Sigmoid colon (tissue), 7 donors: ENCODE measurements at regions of chr20 and their contacts with region 1.

Region 1: DNA sequence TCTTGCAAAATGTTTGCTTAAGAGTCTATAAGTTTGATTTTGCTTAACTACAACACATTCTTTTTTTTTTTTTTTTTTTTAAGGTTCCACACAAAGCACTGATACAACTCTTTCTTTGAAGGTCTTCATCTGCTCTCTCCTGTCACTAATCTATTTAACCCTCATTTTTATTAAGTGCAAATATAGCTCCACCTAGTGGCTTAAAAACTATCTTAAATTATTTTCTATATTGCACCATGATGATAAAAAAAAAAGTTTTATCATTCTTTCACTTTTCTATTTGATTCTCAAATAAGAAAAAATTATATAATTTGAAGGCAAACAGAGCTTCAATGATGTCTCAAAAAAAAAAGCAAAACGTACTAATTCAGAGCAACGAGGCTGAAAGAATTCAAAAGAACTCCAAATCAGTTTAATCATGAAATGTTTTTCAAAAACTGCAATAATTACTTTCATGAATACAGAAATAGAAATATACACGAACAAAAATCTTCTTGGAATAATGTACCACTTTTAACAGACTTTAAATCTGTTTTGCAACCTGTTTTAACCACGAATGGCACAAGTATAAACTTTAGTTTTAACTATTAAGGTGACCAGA is 12.8 kb downstream of the ESF1 start:
- DNase-seq: no peak
- H3K4me3 ChIP-seq: no peak overlapping the region
- H3K27ac ChIP-seq: no peak overlapping the region
- H3K4me1 ChIP-seq: no peaks in the 10 kb centered on the region
- H3K27me3 ChIP-seq: no peaks in the 10 kb centered on the region
- CTCF ChIP-seq: peak in 3 of 4 experiments; percentile 22 to 39 (median 34)
- EP300 ChIP-seq: no peak
- POLR2A ChIP-seq: no peak

Region 2: DNA sequence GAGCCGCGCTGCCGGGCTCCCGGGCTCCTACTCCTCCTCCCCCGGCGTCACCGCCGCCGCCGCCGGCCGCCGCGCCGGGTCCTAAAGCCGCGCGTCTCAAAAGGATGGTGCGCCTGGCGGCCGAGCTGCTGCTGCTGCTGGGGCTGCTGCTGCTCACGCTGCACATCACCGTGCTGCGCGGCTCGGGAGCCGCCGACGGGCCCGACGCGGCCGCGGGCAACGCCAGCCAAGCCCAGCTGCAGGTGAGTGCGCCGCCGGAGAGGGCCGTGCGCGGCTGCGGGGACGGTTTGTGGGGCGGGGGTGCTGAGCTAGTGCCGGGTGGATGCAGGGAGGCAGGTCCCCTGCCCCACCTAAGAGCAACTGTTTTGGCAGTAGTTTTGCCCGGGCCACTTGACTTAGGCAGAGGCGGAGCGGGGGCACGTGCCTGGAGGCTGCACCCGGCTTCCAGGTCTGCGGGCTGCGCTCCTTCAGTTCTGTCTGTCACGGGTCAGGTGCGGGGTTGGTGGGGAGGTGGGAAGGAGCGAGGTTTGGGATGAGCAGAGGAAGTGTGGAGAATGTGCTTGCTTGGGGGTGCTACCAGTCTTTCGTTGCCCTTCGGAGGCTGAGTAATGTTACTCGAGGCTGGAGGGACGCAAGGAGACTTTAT is 550.2 kb before region 1 on chr20:
- intact Hi-C with region 1: loop called (anchors 2 kb)
- DNase-seq: peak; percentile 74
- H3K4me3 ChIP-seq: peak overlapping the region; percentile 12 to 62 (median 54)
- H3K27ac ChIP-seq: peak overlapping the region in 3 of 4 donors; percentile 1 to 52 (median 27)
- H3K4me1 ChIP-seq: peaks cover 0 to 22% (median 21%) of the 10 kb centered on the region in 4 donors
- H3K27me3 ChIP-seq: peaks cover 12 to 40% (median 29%) of the 10 kb centered on the region in 3 donors
- CTCF ChIP-seq: no peak
- EP300 ChIP-seq: no peak
- POLR2A ChIP-seq: no peak